Transverse colon (tissue), 4 donors: ENCODE measurements at regions of chr15 and their contacts with region 1.

Region 1: DNA sequence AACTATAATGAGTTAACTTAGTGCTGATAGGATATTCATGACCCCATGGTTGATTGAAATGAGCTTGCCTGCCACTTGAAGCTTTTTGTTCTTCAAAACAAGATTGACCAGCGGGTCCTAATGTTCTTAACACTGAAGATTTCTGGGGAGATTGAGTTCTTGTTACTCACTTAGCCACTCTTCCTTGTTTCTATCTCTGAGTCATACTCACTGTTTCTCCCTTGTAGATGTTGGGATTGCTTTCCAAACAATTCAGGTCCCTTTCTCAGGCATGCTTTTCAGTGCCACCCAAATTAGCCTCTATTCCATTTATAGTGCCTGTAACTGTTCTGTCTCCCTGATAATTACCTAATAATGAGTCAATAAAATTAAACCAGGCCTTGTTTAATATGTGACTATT is 517.0 kb downstream of the SQOR start:
- DNase-seq: no peak
- H3K4me3 ChIP-seq: no peak overlapping the region
- H3K27ac ChIP-seq: no peak overlapping the region
- H3K4me1 ChIP-seq: no peaks in the 10 kb centered on the region
- H3K27me3 ChIP-seq: no peaks in the 10 kb centered on the region
- CTCF ChIP-seq: no peak
- EP300 ChIP-seq: no peak
- POLR2A ChIP-seq: no peak

Region 2: DNA sequence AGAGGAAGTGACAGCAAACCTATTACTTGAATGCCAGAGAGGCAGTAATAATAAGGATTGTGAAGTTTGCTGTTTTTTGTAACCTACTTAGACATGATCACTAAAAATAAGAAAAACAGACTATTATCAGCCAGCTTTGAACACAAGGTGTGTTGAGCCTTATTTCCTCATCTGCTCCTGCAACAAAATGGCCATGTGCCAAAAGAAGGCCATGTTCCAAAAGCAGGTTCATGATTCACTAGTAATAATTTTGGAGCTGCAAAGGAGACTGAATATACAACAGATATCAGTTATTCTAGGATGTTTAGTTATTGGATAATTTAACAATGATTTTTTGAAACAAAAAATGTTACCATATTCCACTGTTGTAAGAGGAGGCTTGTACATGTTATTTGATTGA is 61.8 kb after region 1 on chr15:
- in situ Hi-C with region 1: no loop called
- intact Hi-C with region 1: loop called (anchors 2 kb)
- DNase-seq: no peak
- H3K4me3 ChIP-seq: no peak overlapping the region
- H3K27ac ChIP-seq: no peak overlapping the region
- H3K4me1 ChIP-seq: no peaks in the 10 kb centered on the region
- H3K27me3 ChIP-seq: no peaks in the 10 kb centered on the region
- CTCF ChIP-seq: no peak
- EP300 ChIP-seq: no peak
- POLR2A ChIP-seq: no peak